ENCODE measurements at regions of chr9 and their contacts with region 1.

Region 1: DNA sequence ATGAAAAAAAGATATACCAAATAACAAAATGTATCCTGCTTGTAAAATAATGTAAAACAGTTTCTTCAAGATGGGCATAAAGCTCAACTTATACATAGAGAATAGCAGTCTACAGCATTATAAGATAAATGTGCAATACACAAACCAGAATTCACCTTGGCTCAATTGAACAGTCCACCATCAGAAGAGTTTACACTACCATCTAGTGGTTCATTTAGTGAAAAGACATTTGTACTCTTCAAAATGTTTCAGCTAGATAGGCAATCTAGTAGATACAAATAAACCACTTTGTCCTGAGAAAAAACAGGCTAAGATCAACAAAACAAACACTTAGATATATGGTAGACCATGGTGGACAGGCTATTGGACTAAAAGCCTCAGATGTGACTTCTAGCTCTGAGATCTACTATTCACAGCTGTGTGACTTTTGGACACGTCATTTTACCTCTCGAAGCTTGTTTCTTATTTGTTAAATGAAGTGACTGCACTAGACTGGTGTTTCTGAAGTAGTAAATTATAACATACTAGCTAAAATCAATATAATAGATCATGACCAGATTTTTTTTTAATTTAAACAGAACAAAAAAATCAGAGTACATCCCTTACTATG is 22.1 kb upstream of the TPD52L3 start:
- DNase-seq: no peak
- ATAC-seq: peak; percentile 70
- H3K4me3 ChIP-seq: no peak overlapping the region
- H3K27ac ChIP-seq: no peak overlapping the region
- H3K4me1 ChIP-seq: no peaks in the 10 kb centered on the region
- H3K27me3 ChIP-seq: no peaks in the 10 kb centered on the region

Region 2: GRCh38 chr9:5886114-5886939 is 419.7 kb before region 1 on chr9:
- intact Hi-C with region 1: loop called in 1 of 2 experiments (anchors 10 kb)
- DNase-seq: peak; percentile 77 to 90
- ATAC-seq: peak; percentile 64
- H3K4me3 ChIP-seq: no peak overlapping the region
- H3K27ac ChIP-seq: no peak overlapping the region
- H3K4me1 ChIP-seq: no peaks in the 10 kb centered on the region
- H3K27me3 ChIP-seq: no peaks in the 10 kb centered on the region

Region 3: DNA sequence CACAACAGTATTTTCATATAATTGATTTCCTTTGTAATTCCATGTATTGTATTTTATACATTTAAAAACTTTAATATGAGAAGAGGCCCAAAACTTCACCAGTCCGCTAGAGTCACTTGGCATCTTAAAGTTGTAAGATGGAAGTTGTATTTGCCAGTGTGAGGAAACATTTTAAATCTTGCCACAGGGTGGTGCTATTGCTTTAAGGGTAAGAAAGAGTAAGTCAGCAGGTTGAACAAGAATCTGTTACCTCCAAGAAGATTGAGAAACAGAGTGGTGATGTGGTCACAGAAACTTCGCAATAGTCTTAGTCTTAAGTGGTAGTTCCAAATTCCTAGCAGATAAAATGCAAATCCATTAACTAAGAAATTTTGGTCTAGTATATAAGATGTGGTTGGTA is 250.8 kb before region 1 on chr9:
- intact Hi-C with region 1: loop called (anchors 2 to 5 kb)
- DNase-seq: no peak
- ATAC-seq: no peak
- H3K4me3 ChIP-seq: no peak overlapping the region
- H3K27ac ChIP-seq: no peak overlapping the region
- H3K4me1 ChIP-seq: no peaks in the 10 kb centered on the region
- H3K27me3 ChIP-seq: no peaks in the 10 kb centered on the region

Region 4: GRCh38 chr9:6197330-6197729 is 108.7 kb before region 1 on chr9:
- intact Hi-C with region 1: loop called (anchors 2 to 5 kb)
- DNase-seq: no peak
- ATAC-seq: peak; percentile 76
- H3K4me3 ChIP-seq: no peak overlapping the region
- H3K27ac ChIP-seq: no peak overlapping the region
- H3K4me1 ChIP-seq: no peaks in the 10 kb centered on the region
- H3K27me3 ChIP-seq: no peaks in the 10 kb centered on the region

Region 5: DNA sequence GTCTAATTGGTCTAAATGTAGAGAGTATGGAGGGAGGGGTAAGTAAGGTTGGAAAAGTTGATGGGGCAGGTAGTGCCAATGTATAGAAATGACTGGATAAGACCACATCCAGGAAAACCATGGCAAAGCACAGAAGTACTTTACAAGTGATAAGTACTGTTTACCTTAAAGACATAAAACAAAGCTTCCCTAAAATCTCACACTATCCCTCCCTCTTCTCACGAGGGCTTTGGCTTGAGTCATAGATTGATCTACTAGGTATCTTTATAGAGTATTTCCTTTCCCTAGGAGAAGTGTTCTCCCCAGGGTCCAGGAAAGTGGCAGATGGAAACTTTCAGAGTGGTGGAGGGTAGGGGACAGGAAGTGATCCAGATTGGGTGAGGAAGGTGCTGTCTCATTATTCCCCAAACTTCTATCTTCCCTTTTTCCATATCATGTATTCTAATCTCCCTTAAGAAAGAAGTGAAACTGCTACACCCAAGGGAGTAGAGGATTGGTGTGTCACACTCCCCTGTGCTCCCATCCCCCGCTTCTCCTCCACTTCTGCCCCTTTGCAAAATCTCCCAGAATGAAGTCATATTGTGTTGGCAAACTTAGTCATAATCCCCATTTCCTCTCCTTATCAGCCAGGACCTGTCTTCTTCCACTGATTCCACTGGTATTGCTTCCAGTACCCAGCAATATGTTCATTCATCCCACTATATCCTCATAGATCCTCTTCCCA is 75.9 kb before region 1 on chr9:
- intact Hi-C with region 1: no loop called
- DNase-seq: peak in 1 of 2 donors; percentile 49
- ATAC-seq: no peak
- H3K4me3 ChIP-seq: no peak overlapping the region
- H3K27ac ChIP-seq: no peak overlapping the region
- H3K4me1 ChIP-seq: peaks cover 4 to 21% of the 10 kb centered on the region in 2 donors
- H3K27me3 ChIP-seq: no peaks in the 10 kb centered on the region

Region 6: DNA sequence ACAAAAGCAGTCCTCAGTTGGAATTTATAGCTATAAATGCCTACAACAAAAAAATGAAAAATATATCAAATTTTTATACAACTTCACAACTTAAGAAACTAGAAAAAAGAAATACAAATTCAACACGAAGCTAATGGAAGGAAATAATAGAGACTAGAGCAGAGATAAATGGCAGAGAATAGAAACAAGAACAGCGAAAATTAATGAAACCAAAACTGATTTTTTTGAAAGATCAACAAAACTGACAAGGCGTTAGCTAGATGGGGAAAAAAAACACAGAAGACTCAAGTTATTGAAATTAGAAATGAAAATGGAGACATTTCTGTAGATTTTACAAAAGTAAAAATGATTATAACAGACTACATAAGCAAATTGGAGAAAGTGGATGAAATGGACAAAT is 42.7 kb after region 1 on chr9:
- intact Hi-C with region 1: no loop called
- DNase-seq: no peak
- ATAC-seq: no peak
- H3K4me3 ChIP-seq: no peak overlapping the region
- H3K27ac ChIP-seq: no peak overlapping the region
- H3K4me1 ChIP-seq: no peaks in the 10 kb centered on the region
- H3K27me3 ChIP-seq: no peaks in the 10 kb centered on the region

Region 7: DNA sequence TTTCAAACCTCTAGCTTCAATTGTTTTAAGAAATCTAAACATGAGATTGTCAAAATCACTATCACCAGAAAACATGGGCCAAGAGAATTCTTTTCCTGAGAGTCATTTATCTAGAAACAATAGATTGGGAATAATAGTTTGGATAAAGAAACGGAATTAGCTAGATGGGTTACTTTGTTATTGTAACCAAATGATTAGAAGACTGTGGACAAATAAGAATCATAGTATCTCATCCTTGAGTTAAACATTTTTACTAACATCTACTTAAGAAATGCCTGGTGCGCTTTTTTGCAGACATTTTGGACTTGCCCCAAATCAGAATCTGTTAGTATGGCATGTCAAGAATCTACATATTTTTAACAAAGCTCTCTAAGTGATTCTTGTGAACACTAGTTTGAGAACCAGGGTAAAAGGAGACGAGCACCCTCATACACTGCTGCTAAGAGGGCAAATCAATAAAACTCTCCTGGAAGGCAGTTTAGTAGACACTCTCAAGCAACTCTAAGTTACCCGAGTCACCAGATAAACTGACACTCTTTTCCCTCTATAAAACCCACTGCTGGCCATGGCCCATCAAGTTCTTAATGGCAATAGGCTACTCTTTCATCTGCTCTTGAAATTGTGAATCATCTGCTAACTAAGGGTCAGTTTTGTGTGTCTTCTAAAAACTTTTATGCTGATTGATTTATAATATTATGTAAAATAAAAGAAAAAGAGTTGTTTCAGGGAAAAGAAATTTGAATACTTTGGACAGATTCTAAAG is 61.2 kb after region 1 on chr9:
- intact Hi-C with region 1: no loop called
- DNase-seq: no peak
- ATAC-seq: no peak
- H3K4me3 ChIP-seq: no peak overlapping the region
- H3K27ac ChIP-seq: no peak overlapping the region
- H3K4me1 ChIP-seq: no peaks in the 10 kb centered on the region
- H3K27me3 ChIP-seq: peaks cover 0 to 3% of the 10 kb centered on the region in 2 donors